AG04450 (cell line): ENCODE measurements at regions of chr20 and their contacts with region 1.

Region 1: DNA sequence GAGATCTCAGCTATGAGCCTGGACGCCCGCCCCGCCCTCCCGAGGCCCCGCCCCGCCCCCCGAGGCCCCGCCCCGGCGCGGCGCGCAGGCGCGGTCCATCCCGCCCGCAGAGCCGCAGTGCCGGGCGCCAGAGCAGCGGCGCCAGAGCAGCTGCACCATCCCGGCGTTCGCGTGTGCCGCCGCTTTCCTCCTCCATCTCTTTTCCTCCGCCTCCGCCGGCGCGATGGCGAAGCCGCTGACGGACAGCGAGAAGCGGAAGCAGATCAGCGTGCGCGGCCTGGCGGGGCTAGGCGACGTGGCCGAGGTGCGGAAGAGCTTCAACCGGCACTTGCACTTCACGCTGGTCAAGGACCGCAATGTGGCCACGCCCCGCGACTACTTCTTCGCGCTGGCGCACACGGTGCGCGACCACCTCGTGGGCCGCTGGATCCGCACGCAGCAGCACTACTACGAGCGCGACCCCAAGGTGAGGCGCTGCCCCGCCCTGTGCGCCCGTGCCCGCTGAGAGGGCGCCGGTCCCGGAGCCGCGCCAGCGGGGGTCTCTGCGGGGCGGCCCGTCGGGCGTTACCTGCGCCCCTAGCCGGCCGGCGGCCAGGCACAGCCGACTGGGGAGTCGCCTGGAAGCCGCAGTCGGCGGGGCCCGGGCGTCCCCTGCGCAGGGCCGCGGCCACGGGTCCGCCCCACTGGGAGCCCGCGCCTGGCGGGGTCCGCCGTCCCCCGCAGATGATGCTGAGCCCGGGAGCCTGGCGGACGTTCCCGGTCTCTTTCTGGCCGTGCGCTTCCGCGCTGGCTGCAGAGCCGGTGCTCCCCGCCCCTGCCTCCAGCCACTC is at the start of gene PYGB:
- DNase-seq: peak; percentile 56
- H3K4me3 ChIP-seq: peak within 1 kb of the TSS; percentile 89
- H3K27ac ChIP-seq: peak within 1 kb of the TSS; percentile 87
- H3K27me3 ChIP-seq: no peaks in the 10 kb centered on the region
- CTCF ChIP-seq: no peak
- polyA plus RNA-seq, gene PYGB: 43.2 and 60.0 TPM in 2 replicates

Region 2: GRCh38 chr20:25237610-25238318 is 10.4 kb before region 1 on chr20:
- CTCF ChIA-PET with region 1: interaction called, 14 read pairs
- POLR2A ChIA-PET with region 1: interaction called, 3 read pairs
- DNase-seq: peak; percentile 96
- H3K4me3 ChIP-seq: no peak overlapping the region
- H3K27ac ChIP-seq: peak overlapping the region; percentile 98
- H3K27me3 ChIP-seq: no peaks in the 10 kb centered on the region
- CTCF ChIP-seq: no peak